ENCODE measurements at regions of chr3 and their contacts with region 1.

Region 1: DNA sequence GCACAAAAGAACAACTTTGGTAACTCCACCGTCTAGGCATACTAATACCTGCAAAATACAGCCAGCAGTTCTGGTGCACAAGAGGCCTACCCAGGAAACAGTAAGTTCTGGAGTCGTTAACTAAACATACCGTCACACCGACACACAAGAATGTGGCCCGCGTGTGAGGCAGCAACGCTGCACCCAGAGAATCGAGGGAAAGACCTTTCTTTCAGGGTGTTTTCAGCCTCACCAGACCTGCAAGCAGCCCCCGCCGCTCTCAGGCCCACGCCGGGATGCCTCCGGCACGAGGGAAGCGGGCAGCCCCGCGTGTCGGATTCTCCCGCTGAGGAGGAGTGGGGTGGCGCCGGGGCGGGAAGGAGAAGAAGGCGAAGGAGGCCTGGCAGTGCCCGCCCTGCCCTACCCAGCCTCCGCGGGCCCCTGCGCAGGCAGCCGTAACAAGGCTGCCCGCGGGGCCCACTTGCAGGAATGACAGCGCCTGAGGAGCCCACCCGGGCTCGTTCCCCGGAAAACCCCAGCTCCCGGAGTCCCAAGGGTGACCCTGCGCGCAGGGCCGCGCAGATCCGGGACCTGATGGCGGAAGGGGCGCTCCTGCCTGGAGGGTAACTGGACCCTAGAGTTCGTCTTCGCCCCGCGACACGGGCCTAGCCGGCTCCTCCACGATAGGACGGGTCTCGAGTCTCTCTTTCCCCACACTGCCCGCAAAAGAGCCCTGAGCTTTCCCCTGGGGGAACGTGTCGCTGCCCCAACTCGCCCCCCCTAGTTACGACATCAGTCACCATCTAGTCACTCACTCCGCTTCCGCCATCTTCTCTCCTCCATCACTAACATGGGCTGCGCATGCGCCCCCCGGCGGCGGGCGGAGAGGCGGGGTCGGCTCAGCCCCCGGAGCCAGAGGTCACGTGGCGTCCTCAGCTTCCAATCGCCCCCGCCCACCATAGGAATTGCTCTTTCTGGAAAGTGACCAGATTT is at the start of gene PHC3:
- DNase-seq: peak; percentile 95
- H3K4me3 Mint-ChIP-seq: peak within 1 kb of the TSS; percentile 98
- H3K27ac Mint-ChIP-seq: peak within 1 kb of the TSS; percentile 100
- H3K4me1 Mint-ChIP-seq: peaks cover 21% of the 10 kb centered on the region
- H3K27me3 Mint-ChIP-seq: no peaks in the 10 kb centered on the region
- total RNA-seq, gene PHC3: 37.4 to 38.7 TPM

Region 2: DNA sequence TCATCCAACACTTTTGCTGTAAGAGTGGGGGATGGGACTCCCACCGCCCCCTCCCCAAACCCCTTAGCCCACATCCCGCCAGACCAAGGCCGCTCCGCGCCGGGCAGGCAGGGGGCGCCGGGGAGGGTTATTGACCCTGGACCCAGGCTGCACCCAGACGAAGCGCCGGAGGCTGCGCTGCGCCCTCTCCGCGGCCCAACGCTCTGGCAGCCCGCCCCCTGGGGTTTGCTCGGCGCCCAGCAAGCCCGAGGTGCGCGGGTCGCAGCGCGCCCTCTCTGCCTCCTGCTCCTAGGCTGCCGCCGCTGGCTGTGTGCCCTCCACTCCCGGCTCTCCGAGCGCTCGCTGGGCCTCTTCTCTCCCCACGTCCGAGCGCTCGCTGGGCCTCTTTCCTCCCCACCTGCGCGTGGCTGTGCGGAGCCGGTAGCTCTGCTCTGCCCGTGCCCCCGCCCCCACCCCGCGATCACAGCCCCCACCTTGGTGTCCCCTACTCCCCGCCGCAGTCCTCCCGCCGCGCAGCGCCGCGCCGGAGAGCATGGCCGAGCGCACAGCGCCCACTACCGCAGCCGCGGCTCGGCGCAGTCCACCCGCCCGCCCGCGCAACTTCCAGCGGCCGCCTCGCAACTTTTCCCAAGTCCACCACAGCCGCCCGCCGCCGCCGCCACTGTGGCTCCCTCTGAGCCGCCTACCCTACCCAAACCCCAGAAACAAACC is 518.9 kb before region 1 on chr3:
- CTCF ChIA-PET with region 1: no interaction called
- POLR2A ChIA-PET with region 1: no interaction called
- intact Hi-C with region 1: loop called (anchors 5 kb)
- DNase-seq: peak; percentile 57
- H3K4me3 Mint-ChIP-seq: peak overlapping the region; percentile 71
- H3K27ac Mint-ChIP-seq: no peak overlapping the region
- H3K4me1 Mint-ChIP-seq: peaks cover 39% of the 10 kb centered on the region
- H3K27me3 Mint-ChIP-seq: peaks cover 83% of the 10 kb centered on the region

Region 3: GRCh38 chr3:169812332-169813235 is 368.6 kb before region 1 on chr3 and contains the starts of genes LRRC34 and LRRIQ4:
- CTCF ChIA-PET with region 1: no interaction called
- POLR2A ChIA-PET with region 1: interaction called, 3 read pairs
- intact Hi-C with region 1: loop called (anchors 2 kb)
- DNase-seq: peak; percentile 88
- H3K4me3 Mint-ChIP-seq: peak within 1 kb of the TSS; percentile 75
- H3K27ac Mint-ChIP-seq: peak within 1 kb of the TSS; percentile 43
- H3K4me1 Mint-ChIP-seq: peaks cover 19% of the 10 kb centered on the region
- H3K27me3 Mint-ChIP-seq: no peaks in the 10 kb centered on the region
- total RNA-seq, gene LRRC34: 2.8 to 2.9 TPM
- total RNA-seq, gene LRRIQ4: 0.14 TPM in 1 of 2 experiments, not detected in the other

Region 4: DNA sequence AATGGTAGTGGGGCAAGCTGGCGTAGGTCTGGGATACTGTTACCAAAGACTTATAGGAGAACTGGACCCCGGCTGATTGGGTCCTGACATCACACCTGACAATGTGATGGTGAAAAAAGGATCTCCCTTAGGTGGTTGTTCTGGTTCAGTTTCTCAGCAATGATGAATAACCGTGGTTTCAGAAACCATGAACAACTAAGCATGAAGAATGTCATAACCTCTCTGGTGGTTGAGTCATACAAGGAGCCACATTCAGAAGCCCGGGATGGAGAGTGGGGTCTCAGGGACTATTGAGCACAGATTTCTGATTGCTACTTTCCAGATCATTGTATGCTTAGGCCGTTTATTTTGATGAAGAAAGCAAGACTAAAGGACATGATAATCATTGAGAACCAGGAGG is 126.0 kb before region 1 on chr3:
- CTCF ChIA-PET with region 1: interaction called, 3 read pairs
- POLR2A ChIA-PET with region 1: no interaction called
- intact Hi-C with region 1: loop called (anchors 1 kb)
- DNase-seq: peak; percentile 50
- H3K4me3 Mint-ChIP-seq: no peak overlapping the region
- H3K27ac Mint-ChIP-seq: no peak overlapping the region
- H3K4me1 Mint-ChIP-seq: peaks cover 41% of the 10 kb centered on the region
- H3K27me3 Mint-ChIP-seq: no peaks in the 10 kb centered on the region

Region 5: DNA sequence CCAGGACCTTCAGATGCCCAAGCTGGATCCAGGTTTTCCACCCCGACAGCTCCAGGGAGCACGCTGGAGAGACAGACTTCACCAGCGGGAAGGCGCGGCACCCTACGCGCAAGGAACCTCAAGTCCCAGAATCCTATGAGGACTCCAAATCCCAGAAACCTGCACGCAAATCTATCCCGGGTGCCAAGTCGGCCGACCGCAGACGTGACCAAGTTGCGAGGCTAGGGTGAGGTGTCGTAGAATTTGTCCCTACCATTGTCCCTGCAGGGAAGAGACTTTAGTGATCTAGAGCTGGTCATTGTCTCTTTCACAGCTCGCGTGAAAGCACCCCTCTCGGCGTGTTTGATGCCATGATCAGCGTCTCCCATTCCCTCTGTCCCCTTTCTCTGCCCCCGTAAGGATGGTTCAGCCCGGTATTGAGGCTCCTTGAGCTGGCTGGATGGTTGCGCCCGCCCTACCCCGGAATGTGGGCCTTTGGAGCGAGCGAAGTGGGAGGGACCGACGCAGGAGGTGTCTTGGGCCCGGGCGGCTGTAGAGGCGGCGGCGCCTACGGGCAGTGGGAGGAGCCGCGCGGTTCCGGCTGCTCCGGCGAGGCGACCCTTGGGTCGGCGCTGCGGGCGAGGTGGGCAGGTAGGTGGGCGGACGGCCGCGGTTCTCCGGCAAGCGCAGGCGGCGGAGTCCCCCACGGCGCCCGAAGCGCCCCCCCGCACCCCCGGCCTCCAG is 40.9 kb after region 1 on chr3 and contains the start of gene PRKCI:
- CTCF ChIA-PET with region 1: no interaction called
- POLR2A ChIA-PET with region 1: interaction called, 3 read pairs
- intact Hi-C with region 1: loop called (anchors 1 kb)
- DNase-seq: peak; percentile 95
- H3K4me3 Mint-ChIP-seq: peak within 1 kb of the TSS; percentile 93
- H3K27ac Mint-ChIP-seq: peak within 1 kb of the TSS; percentile 91
- H3K4me1 Mint-ChIP-seq: peaks cover 25% of the 10 kb centered on the region
- H3K27me3 Mint-ChIP-seq: no peaks in the 10 kb centered on the region
- total RNA-seq, gene PRKCI: 27.0 to 27.6 TPM

Region 6: DNA sequence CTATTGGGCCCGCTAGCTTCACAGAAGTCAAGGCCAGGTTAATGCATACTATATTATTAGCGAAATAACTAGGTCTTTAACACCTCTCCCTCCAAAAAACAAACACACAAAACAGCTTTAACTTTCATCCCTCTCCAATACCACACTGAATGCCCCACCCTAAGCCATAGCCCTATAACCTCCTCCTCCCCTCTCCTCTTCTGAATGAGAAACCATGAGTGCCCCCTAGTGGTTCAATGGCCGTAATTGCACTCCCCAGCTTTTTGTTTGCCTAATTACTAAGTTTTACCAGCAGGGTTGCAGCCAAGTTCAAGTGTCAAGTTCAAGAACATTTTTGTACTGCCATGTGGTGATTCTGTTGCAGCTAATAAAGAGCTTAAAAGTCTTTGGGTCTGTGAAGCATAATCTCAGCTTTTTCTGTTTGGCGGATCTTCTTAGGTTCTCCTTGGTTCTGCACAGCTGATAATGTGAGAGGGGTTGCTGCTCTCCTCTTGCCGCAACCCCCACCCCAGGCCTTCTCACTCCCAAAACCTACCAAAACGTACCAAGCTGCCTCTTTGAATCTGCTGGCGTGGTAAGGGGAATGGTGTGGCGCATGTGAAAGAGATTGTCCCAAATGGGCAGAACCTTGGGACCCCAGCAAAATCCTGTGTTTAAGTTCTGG is 630.9 kb after region 1 on chr3:
- CTCF ChIA-PET with region 1: no interaction called
- POLR2A ChIA-PET with region 1: no interaction called
- intact Hi-C with region 1: loop called (anchors 10 kb)
- DNase-seq: peak; percentile 75
- H3K4me3 Mint-ChIP-seq: no peak overlapping the region
- H3K27ac Mint-ChIP-seq: no peak overlapping the region
- H3K4me1 Mint-ChIP-seq: peaks cover 4% of the 10 kb centered on the region
- H3K27me3 Mint-ChIP-seq: no peaks in the 10 kb centered on the region